ENCODE measurements at regions of chr15 and their contacts with region 1.

Region 1: GRCh38 chr15:58331903-58332675 is 99.7 kb upstream of the LIPC start:
- DNase-seq: peak; percentile 92
- ATAC-seq: peak; percentile 85
- H3K4me3 ChIP-seq: peak overlapping the region; percentile 26 to 67 (median 48)
- H3K27ac ChIP-seq: peak overlapping the region; percentile 74
- H3K4me1 ChIP-seq: peaks cover 50% of the 10 kb centered on the region
- H3K27me3 ChIP-seq: no peaks in the 10 kb centered on the region; a peak in 1 of 5 replicates
- CTCF ChIP-seq: no peak
- EP300 ChIP-seq: peak in 1 of 2 experiments; percentile 85; a peak in 2 of 4 replicates
- POLR2A ChIP-seq: peak; percentile 65 to 91
- RAD21 ChIP-seq: no peak

Region 2: GRCh38 chr15:58070801-58071418 is 261.2 kb before region 1 on chr15:
- CTCF ChIA-PET with region 1: no interaction called
- POLR2A ChIA-PET with region 1: no interaction called
- in situ Hi-C with region 1: no loop called
- intact Hi-C with region 1: no loop called
- DNase-seq: peak; percentile 40
- ATAC-seq: no peak
- H3K4me3 ChIP-seq: no peak overlapping the region
- H3K27ac ChIP-seq: no peak overlapping the region
- H3K4me1 ChIP-seq: peaks cover 5% of the 10 kb centered on the region; the same call in 1 of the 2 replicates
- H3K27me3 ChIP-seq: peaks cover 0 to 12% of the 10 kb centered on the region in 2 experiments; a peak in 2 of 5 replicates
- CTCF ChIP-seq: peak; percentile 76
- EP300 ChIP-seq: no peak
- POLR2A ChIP-seq: no peak
- RAD21 ChIP-seq: no peak

Region 3: DNA sequence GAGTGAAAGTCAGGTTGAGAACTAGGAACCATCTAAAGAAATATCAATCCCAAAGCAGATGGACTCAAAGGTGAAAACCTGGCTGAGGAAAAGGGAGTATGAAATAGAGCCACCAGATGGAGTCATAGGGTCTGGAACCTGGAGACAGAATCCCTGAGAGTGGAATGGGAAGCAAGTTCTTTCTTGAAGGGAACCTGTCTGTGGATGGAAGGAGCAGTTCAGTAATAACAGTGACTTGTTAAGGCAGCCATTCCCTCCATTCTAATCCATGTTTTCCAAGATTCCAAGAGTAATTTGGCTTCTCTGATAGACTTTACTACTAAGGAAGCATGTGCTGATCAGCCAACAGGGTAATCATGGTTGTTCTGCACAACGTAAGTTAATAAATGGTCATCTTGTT is 216.4 kb before region 1 on chr15:
- CTCF ChIA-PET with region 1: no interaction called
- POLR2A ChIA-PET with region 1: no interaction called
- in situ Hi-C with region 1: no loop called
- intact Hi-C with region 1: no loop called
- DNase-seq: peak; percentile 9
- ATAC-seq: peak; percentile 66
- H3K4me3 ChIP-seq: no peak overlapping the region
- H3K27ac ChIP-seq: no peak overlapping the region
- H3K4me1 ChIP-seq: peaks cover 53% of the 10 kb centered on the region
- H3K27me3 ChIP-seq: no peaks in the 10 kb centered on the region
- CTCF ChIP-seq: peak; percentile 69
- EP300 ChIP-seq: no peak
- POLR2A ChIP-seq: no peak
- RAD21 ChIP-seq: 0 out of 2 replicates have a peak, but pooled peaks have one; percentile 25

Region 4: GRCh38 chr15:58179741-58180381 is 152.2 kb before region 1 on chr15:
- CTCF ChIA-PET with region 1: no interaction called
- POLR2A ChIA-PET with region 1: no interaction called
- in situ Hi-C with region 1: no loop called
- intact Hi-C with region 1: no loop called
- DNase-seq: no peak
- ATAC-seq: no peak
- H3K4me3 ChIP-seq: no peak overlapping the region
- H3K27ac ChIP-seq: no peak overlapping the region
- H3K4me1 ChIP-seq: no peaks in the 10 kb centered on the region
- H3K27me3 ChIP-seq: no peaks in the 10 kb centered on the region; a peak in 1 of 5 replicates
- CTCF ChIP-seq: no peak
- EP300 ChIP-seq: no peak
- POLR2A ChIP-seq: no peak
- RAD21 ChIP-seq: no peak

Region 5: GRCh38 chr15:58203537-58203936 is 128.6 kb before region 1 on chr15:
- CTCF ChIA-PET with region 1: no interaction called
- POLR2A ChIA-PET with region 1: no interaction called
- in situ Hi-C with region 1: no loop called
- intact Hi-C with region 1: no loop called
- DNase-seq: no peak
- ATAC-seq: no peak
- H3K4me3 ChIP-seq: no peak overlapping the region
- H3K27ac ChIP-seq: no peak overlapping the region
- H3K4me1 ChIP-seq: no peaks in the 10 kb centered on the region
- H3K27me3 ChIP-seq: no peaks in the 10 kb centered on the region
- CTCF ChIP-seq: no peak
- EP300 ChIP-seq: no peak
- POLR2A ChIP-seq: no peak
- RAD21 ChIP-seq: no peak

Region 6: DNA sequence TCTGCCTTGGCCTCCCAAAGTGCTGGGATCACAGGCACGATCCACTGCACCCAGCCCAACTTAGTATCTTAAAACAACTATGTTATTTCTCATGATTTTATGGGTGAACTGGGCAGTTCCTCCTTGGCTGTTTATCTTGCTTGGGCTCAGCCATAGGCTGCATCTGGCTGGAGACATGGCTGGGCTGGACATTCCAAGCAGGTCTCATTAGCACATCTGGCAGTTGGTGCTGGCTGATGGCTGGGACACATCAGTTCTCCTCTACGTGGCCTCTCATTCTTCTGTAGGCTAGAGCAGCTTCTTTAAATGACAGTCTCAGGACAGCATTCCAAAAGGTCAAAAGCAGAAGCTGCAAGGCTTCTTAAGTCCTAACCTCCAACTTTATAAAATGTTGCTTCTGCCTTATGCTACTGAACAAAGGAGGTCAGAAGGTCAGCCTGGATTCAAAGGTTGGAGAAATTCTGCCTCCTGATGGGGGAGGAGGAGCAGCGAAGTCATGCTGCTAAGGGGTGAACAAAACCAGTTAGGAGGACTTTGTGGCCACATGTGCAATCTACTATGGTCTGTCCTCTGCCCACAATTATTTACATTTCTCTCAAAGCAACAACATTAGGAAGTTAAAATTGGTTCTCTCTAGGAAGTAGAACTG is 49.9 kb before region 1 on chr15:
- CTCF ChIA-PET with region 1: no interaction called
- POLR2A ChIA-PET with region 1: interaction called, 45 read pairs
- in situ Hi-C with region 1: no loop called
- intact Hi-C with region 1: loop called (anchors 10 kb)
- DNase-seq: peak; percentile 58
- ATAC-seq: peak; percentile 30
- H3K4me3 ChIP-seq: no peak overlapping the region
- H3K27ac ChIP-seq: peak overlapping the region; percentile 78
- H3K4me1 ChIP-seq: peaks cover 56% of the 10 kb centered on the region
- H3K27me3 ChIP-seq: no peaks in the 10 kb centered on the region
- CTCF ChIP-seq: peak; percentile 38
- EP300 ChIP-seq: peak in 1 of 2 experiments; percentile 83; a peak in 2 of 4 replicates
- POLR2A ChIP-seq: no peak
- RAD21 ChIP-seq: no peak

Region 7: DNA sequence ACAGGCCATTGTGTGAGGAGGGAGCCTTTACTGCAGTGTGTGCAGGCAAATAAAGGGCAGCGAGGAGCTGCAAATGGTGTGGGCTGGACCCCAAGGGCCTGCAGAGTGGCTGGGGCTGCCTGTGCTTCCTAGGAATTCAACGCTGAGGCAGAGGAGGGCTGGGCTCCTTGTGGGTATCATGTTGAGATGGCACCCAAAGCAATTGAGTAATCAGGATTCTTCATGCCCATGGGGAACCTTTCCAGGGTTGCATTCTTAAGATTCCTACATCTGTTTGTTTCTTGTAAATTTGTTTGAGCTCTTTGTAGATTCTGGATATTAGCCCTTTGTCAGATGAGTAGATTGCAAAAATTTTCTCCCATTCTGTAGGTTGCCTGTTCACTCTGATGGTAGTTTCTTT is 14.3 kb after region 1 on chr15:
- CTCF ChIA-PET with region 1: no interaction called
- POLR2A ChIA-PET with region 1: interaction called, 16 read pairs
- in situ Hi-C with region 1: no loop called
- intact Hi-C with region 1: no loop called
- DNase-seq: no peak
- ATAC-seq: no peak
- H3K4me3 ChIP-seq: no peak overlapping the region
- H3K27ac ChIP-seq: no peak overlapping the region
- H3K4me1 ChIP-seq: peaks cover 8% of the 10 kb centered on the region
- H3K27me3 ChIP-seq: peaks cover 0 to 4% of the 10 kb centered on the region in 2 experiments; a peak in 1 of 5 replicates
- CTCF ChIP-seq: no peak
- EP300 ChIP-seq: no peak
- POLR2A ChIP-seq: no peak
- RAD21 ChIP-seq: no peak

Region 8: DNA sequence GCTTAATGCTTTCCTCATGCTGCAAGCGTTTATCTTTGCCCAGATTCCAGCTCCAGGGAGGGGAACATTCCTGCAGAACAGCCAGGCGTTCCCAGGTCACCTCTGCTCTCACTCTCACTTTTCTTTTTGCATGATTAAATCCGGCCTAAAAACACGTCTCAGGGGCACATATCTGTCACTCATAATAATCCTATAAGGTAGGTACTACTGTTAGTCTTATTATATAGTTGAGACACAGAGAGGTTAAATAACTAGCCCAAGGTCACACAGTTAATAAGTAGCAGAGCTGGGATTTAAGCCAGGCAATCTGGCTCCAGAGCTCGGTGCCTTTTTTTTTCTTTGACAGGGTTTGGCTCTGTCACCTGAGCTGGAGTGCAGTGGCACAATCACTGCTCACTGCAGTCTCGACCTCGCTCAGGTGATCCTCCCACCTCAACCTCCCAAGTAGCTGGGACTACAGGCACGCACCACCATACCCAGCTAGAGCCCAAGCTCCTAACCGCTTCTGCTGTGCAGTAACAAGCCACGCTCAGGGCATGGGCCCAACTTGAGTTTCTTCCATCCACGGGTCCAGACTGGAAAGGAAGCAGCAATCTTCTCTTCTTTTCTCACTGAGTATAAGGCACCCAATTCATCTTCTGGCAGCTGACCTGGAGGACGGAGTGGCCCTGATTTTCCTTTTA is 196.2 kb after region 1 on chr15:
- CTCF ChIA-PET with region 1: no interaction called
- POLR2A ChIA-PET with region 1: interaction called, 12 read pairs
- in situ Hi-C with region 1: no loop called
- intact Hi-C with region 1: no loop called
- DNase-seq: peak; percentile 89
- ATAC-seq: peak; percentile 92
- H3K4me3 ChIP-seq: peak overlapping the region in 1 of 3 experiments; percentile 47; a peak in 1 of 6 replicates
- H3K27ac ChIP-seq: peak overlapping the region; percentile 78
- H3K4me1 ChIP-seq: peaks cover 61% of the 10 kb centered on the region
- H3K27me3 ChIP-seq: no peaks in the 10 kb centered on the region
- CTCF ChIP-seq: no peak
- EP300 ChIP-seq: peak in 1 of 2 experiments; percentile 61; a peak in 1 of 4 replicates
- POLR2A ChIP-seq: no peak
- RAD21 ChIP-seq: no peak; the same call in 1 of the 2 replicates